Head of caudate nucleus (tissue), 42 donors: ENCODE measurements at regions of chr15 and their contacts with region 1.

Region 1: DNA sequence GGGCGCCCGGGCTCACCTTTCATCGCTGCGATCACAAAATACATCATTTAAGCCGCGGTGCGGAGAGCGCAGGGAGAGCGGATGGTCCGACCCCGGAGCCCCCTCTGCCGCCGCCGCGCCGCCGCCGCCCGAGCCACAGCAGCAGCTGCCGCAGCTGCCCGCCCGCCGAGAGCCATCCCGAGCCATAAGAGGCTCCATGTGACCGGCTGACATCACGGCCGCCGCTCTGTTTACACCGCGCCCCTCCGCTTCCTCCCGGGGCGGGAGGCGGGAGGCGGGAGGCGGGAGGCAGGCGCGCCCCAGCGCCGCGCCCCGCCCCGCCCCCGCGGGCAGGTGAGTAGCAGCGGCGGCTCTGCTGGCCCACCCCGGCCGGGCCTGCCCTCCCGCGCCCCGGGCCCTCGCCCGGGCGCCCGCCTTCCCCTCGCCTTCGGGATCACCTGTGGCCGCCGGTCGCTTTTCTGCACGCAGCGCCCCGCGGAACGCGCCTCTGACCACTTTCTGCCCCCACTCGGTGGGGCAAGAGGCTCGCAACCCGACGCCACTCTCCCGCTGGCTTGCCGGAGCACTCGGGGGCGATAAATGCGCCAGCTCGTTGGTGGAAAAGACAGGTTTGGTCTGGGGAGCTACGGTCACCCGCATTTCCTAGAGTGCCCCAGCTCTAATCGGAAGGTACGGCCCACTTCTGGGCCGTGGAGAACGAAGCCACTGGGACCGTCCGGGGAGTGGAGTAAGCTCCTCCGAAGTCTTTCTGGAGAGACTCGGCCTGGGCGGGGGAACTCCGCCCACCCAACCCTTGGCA is 113.6 kb upstream of the ICE2 start:
- DNase-seq: peak; percentile 73 to 94 (median 87)

Region 2: DNA sequence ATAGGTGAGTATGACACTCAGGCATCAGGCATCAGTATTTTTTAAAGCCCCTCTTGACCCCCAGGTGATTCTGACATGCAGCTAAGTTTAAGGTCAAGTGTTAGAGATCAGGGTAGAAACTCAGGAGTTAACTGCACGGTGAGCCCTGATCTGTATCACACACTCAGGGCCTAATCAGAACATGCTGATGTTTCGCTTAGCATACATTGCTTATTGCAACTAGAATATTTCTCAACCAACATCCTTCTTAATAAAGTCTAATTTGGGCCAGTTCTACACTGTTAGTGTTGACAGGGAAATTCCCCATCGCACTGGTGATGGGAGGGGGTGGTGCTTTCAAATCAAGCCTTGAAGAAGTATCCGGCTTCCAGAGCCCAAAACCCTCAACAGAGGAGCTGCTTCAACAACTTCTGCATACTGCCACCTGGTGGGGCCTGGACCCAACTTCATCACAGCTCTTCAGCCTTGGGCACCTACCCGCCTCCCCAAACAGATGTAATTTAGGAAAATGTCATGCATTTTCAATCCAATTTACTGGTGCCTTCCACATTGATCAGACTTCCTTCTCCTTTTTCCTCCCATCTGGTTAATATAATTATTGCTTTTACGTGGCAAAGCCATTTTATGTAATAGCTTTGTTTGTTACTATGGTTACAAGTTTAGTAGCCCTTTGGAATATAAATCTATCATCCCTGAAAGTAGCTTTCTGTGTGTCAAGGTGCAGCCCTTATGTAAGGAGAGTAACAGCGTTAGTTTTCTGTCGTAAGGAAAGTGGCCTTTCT is 324.3 kb after region 1 on chr15:
- intact Hi-C with region 1: loop called (anchors 5 kb)
- DNase-seq: peak; percentile 71 to 94 (median 86)